CD8-positive, alpha-beta memory T cell (primary cell): ENCODE measurements at regions of chr12 and their contacts with region 1.

Region 1: DNA sequence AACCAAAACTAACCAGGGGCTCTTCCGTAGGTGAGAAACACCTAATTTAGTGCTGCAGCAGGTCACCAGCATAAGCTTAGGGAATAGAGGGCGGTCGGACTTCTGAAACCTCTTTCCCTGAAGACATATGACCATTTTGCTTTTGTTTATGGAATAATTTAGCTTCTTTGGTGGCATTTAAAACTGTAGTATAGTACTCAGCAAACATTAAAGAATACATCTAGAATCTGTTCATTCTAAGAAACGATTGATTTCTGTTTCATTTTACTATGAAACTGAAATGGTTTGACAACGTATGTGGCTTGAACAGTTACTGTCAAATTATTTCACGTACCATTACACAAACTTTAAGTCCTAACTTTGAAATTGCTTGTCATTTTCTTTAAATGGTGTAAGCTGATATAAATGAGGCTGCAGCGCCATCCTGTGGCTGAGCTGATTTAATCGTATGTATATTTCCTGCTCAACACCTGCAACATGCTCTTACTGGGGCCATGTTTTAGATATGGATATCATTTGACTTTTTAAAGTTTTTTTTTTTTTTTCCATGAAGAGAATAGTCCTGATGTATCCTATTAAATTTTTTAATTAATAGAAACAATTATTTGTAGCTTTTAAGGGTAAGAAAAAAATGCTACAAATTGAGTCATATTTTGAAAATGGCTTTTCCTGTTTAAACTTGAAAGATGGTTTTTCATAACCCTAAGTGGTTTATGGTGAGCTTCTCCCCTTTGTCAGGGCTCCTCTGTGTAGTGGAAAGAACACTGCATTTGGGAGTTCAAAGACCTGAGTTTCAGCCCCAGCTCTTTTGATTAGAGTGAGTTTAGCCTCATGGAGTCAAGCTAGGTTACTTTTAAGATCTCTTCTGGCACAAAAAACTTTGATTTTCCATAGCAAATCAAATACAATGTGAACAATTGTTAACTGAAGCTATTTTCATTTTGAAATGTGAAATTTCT is 27.4 kb downstream of the CFAP54 start:
- DNase-seq: peak; percentile 72 to 89 (median 77)
- H3K4me3 ChIP-seq: no peak overlapping the region
- H3K4me3 Mint-ChIP-seq: peak overlapping the region in 4 of 7 donors; percentile 39 to 69 (median 57)
- H3K27ac ChIP-seq: no peak overlapping the region
- H3K27ac Mint-ChIP-seq: peak overlapping the region; percentile 26 to 88 (median 68)
- H3K4me1 ChIP-seq: peaks cover 5% of the 10 kb centered on the region
- H3K4me1 Mint-ChIP-seq: peaks cover 5 to 7% (median 6%) of the 10 kb centered on the region in 3 donors
- H3K27me3 ChIP-seq: no peaks in the 10 kb centered on the region
- H3K27me3 Mint-ChIP-seq: no peaks in the 10 kb centered on the region

Region 2: DNA sequence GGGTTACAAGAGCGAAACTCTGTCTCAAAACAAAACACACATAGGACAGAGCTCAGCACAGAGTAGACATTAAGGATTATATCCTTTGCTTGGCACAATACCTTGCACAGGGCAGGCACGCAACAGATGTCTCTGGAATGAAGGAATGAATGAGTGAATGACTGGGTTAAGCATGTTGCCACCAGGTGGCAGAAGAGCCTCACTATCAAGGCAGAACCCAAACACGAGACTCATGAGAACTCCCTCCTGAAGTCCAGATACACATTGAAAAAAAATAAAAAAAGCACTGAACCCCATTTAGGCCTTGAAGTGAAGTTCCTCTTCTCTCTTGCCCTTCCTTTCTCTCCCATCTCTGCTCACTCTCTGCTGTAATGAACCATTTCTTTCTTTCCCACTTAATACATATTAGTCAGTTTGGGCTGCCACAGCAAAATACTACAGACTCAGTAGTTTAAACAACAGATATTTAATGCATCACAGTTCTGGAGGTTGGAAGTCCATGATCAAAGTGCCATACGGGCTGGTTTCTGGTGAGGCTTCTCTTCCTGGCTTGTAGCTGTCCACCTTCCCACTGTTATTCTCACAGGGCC is 454.8 kb before region 1 on chr12:
- CTCF ChIA-PET with region 1: interaction called, 17 read pairs
- POLR2A ChIA-PET with region 1: no interaction called
- DNase-seq: peak; percentile 54 to 77 (median 67)
- H3K4me3 ChIP-seq: no peak overlapping the region
- H3K4me3 Mint-ChIP-seq: no peak overlapping the region
- H3K27ac ChIP-seq: no peak overlapping the region
- H3K27ac Mint-ChIP-seq: peak overlapping the region in 4 of 8 donors; percentile 0 to 86 (median 0)
- H3K4me1 ChIP-seq: peaks cover 14% of the 10 kb centered on the region
- H3K4me1 Mint-ChIP-seq: peaks cover 15 to 29% (median 16%) of the 10 kb centered on the region in 3 donors
- H3K27me3 ChIP-seq: no peaks in the 10 kb centered on the region
- H3K27me3 Mint-ChIP-seq: peaks cover 2 to 3% of the 10 kb centered on the region in 2 donors

Region 3: GRCh38 chr12:96211988-96212387 is 304.8 kb before region 1 on chr12:
- CTCF ChIA-PET with region 1: interaction called, 43 read pairs
- POLR2A ChIA-PET with region 1: interaction called, 3 read pairs
- DNase-seq: peak in 1 of 5 donors; percentile 27
- H3K4me3 ChIP-seq: no peak overlapping the region
- H3K4me3 Mint-ChIP-seq: peak overlapping the region; percentile 50 to 85 (median 70)
- H3K27ac ChIP-seq: no peak overlapping the region
- H3K27ac Mint-ChIP-seq: peak overlapping the region; percentile 70 to 96 (median 89)
- H3K4me1 ChIP-seq: peaks cover 77% of the 10 kb centered on the region
- H3K4me1 Mint-ChIP-seq: peaks cover 74 to 89% (median 76%) of the 10 kb centered on the region in 3 donors
- H3K27me3 ChIP-seq: no peaks in the 10 kb centered on the region
- H3K27me3 Mint-ChIP-seq: no peaks in the 10 kb centered on the region

Region 4: GRCh38 chr12:96489103-96490056 is 27.4 kb before region 1 on chr12 and contains the start of gene CFAP54:
- CTCF ChIA-PET with region 1: interaction called, 68 read pairs
- POLR2A ChIA-PET with region 1: interaction called, 14 read pairs
- DNase-seq: peak; percentile 92 to 97 (median 93)
- H3K4me3 ChIP-seq: peak within 1 kb of the TSS; percentile 66
- H3K4me3 Mint-ChIP-seq: peak within 1 kb of the TSS; percentile 82 to 94 (median 92)
- H3K27ac ChIP-seq: peak within 1 kb of the TSS; percentile 79
- H3K27ac Mint-ChIP-seq: peak within 1 kb of the TSS; percentile 61 to 99 (median 97)
- H3K4me1 ChIP-seq: peaks cover 20% of the 10 kb centered on the region
- H3K4me1 Mint-ChIP-seq: peaks cover 22 to 41% (median 39%) of the 10 kb centered on the region in 3 donors
- H3K27me3 ChIP-seq: no peaks in the 10 kb centered on the region
- H3K27me3 Mint-ChIP-seq: peaks cover 0 to 7% of the 10 kb centered on the region in 2 donors
- total RNA-seq, gene CFAP54: 0.66 to 0.88 TPM

Region 5: GRCh38 chr12:96495841-96496545 is 20.8 kb before region 1 on chr12:
- CTCF ChIA-PET with region 1: interaction called, 13 read pairs
- POLR2A ChIA-PET with region 1: interaction called, 3 read pairs
- DNase-seq: no peak
- H3K4me3 ChIP-seq: no peak overlapping the region
- H3K4me3 Mint-ChIP-seq: peak overlapping the region; percentile 44 to 84 (median 71)
- H3K27ac ChIP-seq: no peak overlapping the region
- H3K27ac Mint-ChIP-seq: peak overlapping the region in 6 of 8 donors; percentile 4 to 79 (median 68)
- H3K4me1 ChIP-seq: peaks cover 15% of the 10 kb centered on the region
- H3K4me1 Mint-ChIP-seq: peaks cover 37 to 52% (median 42%) of the 10 kb centered on the region in 3 donors
- H3K27me3 ChIP-seq: no peaks in the 10 kb centered on the region
- H3K27me3 Mint-ChIP-seq: peaks cover 0 to 1% of the 10 kb centered on the region in 2 donors